Caco-2 (cell line): ENCODE measurements at regions of chrX and their contacts with region 1.

Region 1: GRCh38 chrX:39242187-39242586 is 440.9 kb downstream of the MID1IP1 start:
- DNase-seq: peak; percentile 36 to 38
- H3K4me3 ChIP-seq: no peak overlapping the region
- H3K4me3 Mint-ChIP-seq: no peak overlapping the region
- H3K27ac Mint-ChIP-seq: no peak overlapping the region
- H3K4me1 ChIP-seq: no peaks in the 10 kb centered on the region
- H3K4me1 Mint-ChIP-seq: no peaks in the 10 kb centered on the region
- H3K27me3 ChIP-seq: no peaks in the 10 kb centered on the region
- H3K27me3 Mint-ChIP-seq: no peaks in the 10 kb centered on the region
- CTCF ChIP-seq: peak; percentile 30 to 57

Region 2: GRCh38 chrX:38754102-38754790 is 487.9 kb before region 1 on chrX:
- CTCF ChIA-PET with region 1: no interaction called
- POLR2A ChIA-PET with region 1: no interaction called
- intact Hi-C with region 1: loop called (anchors 2 kb)
- DNase-seq: peak in 1 of 2 experiments; percentile 35
- H3K4me3 ChIP-seq: no peak overlapping the region
- H3K4me3 Mint-ChIP-seq: no peak overlapping the region
- H3K27ac Mint-ChIP-seq: no peak overlapping the region
- H3K4me1 ChIP-seq: no peaks in the 10 kb centered on the region
- H3K4me1 Mint-ChIP-seq: no peaks in the 10 kb centered on the region
- H3K27me3 ChIP-seq: no peaks in the 10 kb centered on the region
- H3K27me3 Mint-ChIP-seq: peaks cover 6% of the 10 kb centered on the region
- CTCF ChIP-seq: peak; percentile 50 to 56

Region 3: DNA sequence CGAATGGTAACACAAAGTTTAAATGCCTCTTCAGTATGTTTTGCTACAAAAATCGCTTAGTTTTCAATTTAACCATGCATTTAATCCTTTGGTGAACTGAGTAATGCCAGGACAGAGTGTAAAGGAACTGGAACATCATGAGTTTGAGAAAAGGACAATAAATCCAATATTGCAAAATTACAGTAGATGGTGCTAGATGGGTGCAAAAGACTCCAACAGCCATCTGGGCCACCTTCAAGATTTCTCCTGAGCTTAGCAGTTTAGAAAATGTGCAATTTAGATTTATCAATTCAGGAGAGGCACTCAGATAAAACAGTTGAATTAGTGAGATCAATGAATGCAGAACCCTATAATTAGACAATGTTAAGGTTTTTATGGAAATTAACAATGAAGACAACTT is 474.1 kb before region 1 on chrX:
- CTCF ChIA-PET with region 1: no interaction called
- POLR2A ChIA-PET with region 1: no interaction called
- intact Hi-C with region 1: loop called (anchors 5 kb)
- DNase-seq: no peak
- H3K4me3 ChIP-seq: no peak overlapping the region
- H3K4me3 Mint-ChIP-seq: no peak overlapping the region
- H3K27ac Mint-ChIP-seq: no peak overlapping the region
- H3K4me1 ChIP-seq: no peaks in the 10 kb centered on the region
- H3K4me1 Mint-ChIP-seq: no peaks in the 10 kb centered on the region
- H3K27me3 ChIP-seq: no peaks in the 10 kb centered on the region
- H3K27me3 Mint-ChIP-seq: peaks cover 9% of the 10 kb centered on the region
- CTCF ChIP-seq: no peak

Region 4: DNA sequence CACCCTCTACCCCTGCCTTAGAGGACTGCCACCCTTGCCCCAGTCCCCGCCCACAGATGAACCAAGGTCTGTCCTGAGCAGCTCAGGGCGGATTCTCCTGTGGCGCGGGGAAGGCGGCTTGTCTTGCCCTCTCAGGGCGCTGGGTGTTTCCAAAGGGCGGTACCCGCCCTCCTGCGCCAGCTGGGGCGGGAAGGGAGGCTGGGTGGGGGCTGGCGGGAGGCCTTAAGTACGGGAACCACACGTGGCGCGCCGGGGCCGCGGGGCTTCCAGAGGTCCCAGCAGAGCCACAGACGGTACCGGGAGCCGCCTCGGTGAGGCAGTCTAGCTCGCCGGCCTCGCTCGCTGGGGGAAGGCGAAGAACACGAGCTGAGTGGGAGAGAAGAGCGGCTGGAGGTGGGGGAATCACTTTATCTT is 79.9 kb before region 1 on chrX:
- CTCF ChIA-PET with region 1: no interaction called
- POLR2A ChIA-PET with region 1: no interaction called
- intact Hi-C with region 1: loop called (anchors 10 kb)
- DNase-seq: no peak
- H3K4me3 ChIP-seq: no peak overlapping the region
- H3K4me3 Mint-ChIP-seq: no peak overlapping the region
- H3K27ac Mint-ChIP-seq: no peak overlapping the region
- H3K4me1 ChIP-seq: no peaks in the 10 kb centered on the region
- H3K4me1 Mint-ChIP-seq: no peaks in the 10 kb centered on the region
- H3K27me3 ChIP-seq: no peaks in the 10 kb centered on the region
- H3K27me3 Mint-ChIP-seq: peaks cover 13% of the 10 kb centered on the region
- CTCF ChIP-seq: no peak

Region 5: DNA sequence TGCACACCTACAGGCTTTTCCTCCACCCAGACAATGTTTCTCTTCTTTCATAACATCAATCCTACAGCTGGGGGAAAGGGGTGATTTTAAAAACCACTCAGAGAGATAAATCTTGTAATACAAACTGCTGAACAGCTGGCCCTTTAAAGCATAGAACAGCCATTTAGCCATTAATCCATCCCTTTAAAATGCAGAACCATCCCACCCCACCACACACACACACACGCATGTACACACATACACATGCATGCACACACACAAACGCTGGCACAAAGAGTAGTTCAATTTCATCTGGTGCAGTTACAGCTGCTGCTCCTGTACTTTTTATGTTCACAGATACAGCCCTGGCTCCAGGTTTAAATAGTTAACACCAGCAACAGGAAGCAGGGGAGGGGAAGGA is 14.8 kb before region 1 on chrX:
- CTCF ChIA-PET with region 1: no interaction called
- POLR2A ChIA-PET with region 1: no interaction called
- intact Hi-C with region 1: no loop called
- DNase-seq: no peak
- H3K4me3 ChIP-seq: no peak overlapping the region
- H3K4me3 Mint-ChIP-seq: no peak overlapping the region
- H3K27ac Mint-ChIP-seq: no peak overlapping the region
- H3K4me1 ChIP-seq: no peaks in the 10 kb centered on the region
- H3K4me1 Mint-ChIP-seq: no peaks in the 10 kb centered on the region
- H3K27me3 ChIP-seq: no peaks in the 10 kb centered on the region
- H3K27me3 Mint-ChIP-seq: peaks cover 4% of the 10 kb centered on the region
- CTCF ChIP-seq: no peak